HepG2 (cell line): ENCODE measurements at regions of chr20 and their contacts with region 1.

Region 1: GRCh38 chr20:45322952-45323383 is 14.9 kb upstream of the MATN4 start:
- DNase-seq: peak; percentile 86
- ATAC-seq: peak; percentile 85
- H3K4me3 ChIP-seq: peak overlapping the region in 1 of 3 experiments; percentile 13; a peak in 1 of 6 replicates
- H3K27ac ChIP-seq: no peak overlapping the region
- H3K4me1 ChIP-seq: no peaks in the 10 kb centered on the region
- H3K27me3 ChIP-seq: peaks cover 2 to 7% of the 10 kb centered on the region in 2 experiments; a peak in 1 of 5 replicates
- CTCF ChIP-seq: peak; percentile 99
- EP300 ChIP-seq: no peak
- POLR2A ChIP-seq: no peak
- RAD21 ChIP-seq: peak; percentile 98

Region 2: GRCh38 chr20:45157962-45158361 is 165.0 kb before region 1 on chr20:
- CTCF ChIA-PET with region 1: no interaction called
- POLR2A ChIA-PET with region 1: no interaction called
- in situ Hi-C with region 1: no loop called
- intact Hi-C with region 1: no loop called
- DNase-seq: no peak
- ATAC-seq: no peak
- H3K4me3 ChIP-seq: no peak overlapping the region
- H3K27ac ChIP-seq: no peak overlapping the region
- H3K4me1 ChIP-seq: no peaks in the 10 kb centered on the region
- H3K27me3 ChIP-seq: no peaks in the 10 kb centered on the region
- CTCF ChIP-seq: no peak
- EP300 ChIP-seq: no peak
- POLR2A ChIP-seq: no peak
- RAD21 ChIP-seq: no peak

Region 3: GRCh38 chr20:45337367-45338120 is 14.6 kb after region 1 on chr20:
- CTCF ChIA-PET with region 1: interaction called, 3 read pairs
- POLR2A ChIA-PET with region 1: interaction called, 74 read pairs
- in situ Hi-C with region 1: no loop called
- intact Hi-C with region 1: loop called (anchors 2 kb)
- DNase-seq: peak; percentile 65
- ATAC-seq: peak; percentile 32
- H3K4me3 ChIP-seq: peak overlapping the region; percentile 31 to 57 (median 32)
- H3K27ac ChIP-seq: peak overlapping the region; percentile 80
- H3K4me1 ChIP-seq: peaks cover 67% of the 10 kb centered on the region
- H3K27me3 ChIP-seq: no peaks in the 10 kb centered on the region
- CTCF ChIP-seq: no peak
- EP300 ChIP-seq: no peak
- POLR2A ChIP-seq: peak in 1 of 2 experiments; percentile 39; a peak in 1 of 4 replicates
- RAD21 ChIP-seq: no peak

Region 4: DNA sequence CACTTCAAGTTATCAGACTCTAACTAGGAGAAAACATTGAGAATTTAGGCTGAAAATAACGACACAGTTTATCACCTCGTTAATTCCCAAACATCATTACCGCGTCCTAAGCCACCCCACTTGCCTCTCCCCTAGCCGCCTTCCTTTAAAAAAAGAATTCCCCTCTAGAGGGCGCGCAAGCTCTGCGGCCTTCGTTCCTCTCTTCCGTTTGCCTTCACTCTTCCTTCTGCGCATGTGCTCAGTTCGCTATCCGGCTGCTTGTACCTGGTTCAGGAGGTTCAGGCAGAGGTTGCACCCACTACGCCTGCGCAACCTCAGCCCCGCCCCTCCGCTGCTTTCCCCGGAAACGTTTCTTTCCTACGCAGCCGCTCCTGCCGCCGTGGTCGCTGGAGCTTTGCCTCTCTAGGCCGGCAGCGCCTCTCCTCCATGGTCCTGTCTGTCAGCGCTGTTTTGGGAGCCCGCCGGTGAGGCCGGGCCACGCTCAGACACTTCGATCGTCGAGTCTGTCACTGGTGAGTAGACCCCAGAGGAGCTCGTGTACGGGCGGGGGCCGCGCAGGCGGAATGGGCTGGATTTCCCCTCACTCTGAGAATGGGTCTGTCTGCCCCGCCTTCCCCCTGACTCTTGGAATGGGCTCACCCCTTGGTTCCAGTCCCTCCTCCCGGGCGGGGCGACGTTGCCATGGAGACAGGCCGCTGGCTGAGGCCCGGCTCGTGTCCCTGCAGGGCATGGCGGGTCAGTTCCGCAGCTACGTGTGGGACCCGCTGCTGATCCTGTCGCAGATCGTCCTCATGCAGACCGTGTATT is 40.0 kb after region 1 on chr20 and contains the start of gene SYS1:
- CTCF ChIA-PET with region 1: interaction called, 11 read pairs
- POLR2A ChIA-PET with region 1: interaction called, 26 read pairs
- in situ Hi-C with region 1: no loop called
- intact Hi-C with region 1: loop called (anchors 1 kb)
- DNase-seq: peak; percentile 100
- ATAC-seq: peak; percentile 89
- H3K4me3 ChIP-seq: peak within 1 kb of the TSS; percentile 78 to 95 (median 91)
- H3K27ac ChIP-seq: peak within 1 kb of the TSS; percentile 92
- H3K4me1 ChIP-seq: peaks cover 64% of the 10 kb centered on the region
- H3K27me3 ChIP-seq: no peaks in the 10 kb centered on the region; a peak in 2 of 5 replicates
- CTCF ChIP-seq: peak; percentile 99
- EP300 ChIP-seq: peak; percentile 8 to 29; a peak in 3 of 4 replicates
- POLR2A ChIP-seq: peak; percentile 94 to 98
- RAD21 ChIP-seq: peak; percentile 89
- total RNA-seq, gene SYS1: 22.0 and 38.3 TPM in 2 replicates

Region 5: GRCh38 chr20:45392733-45393132 is 69.8 kb after region 1 on chr20:
- CTCF ChIA-PET with region 1: no interaction called
- POLR2A ChIA-PET with region 1: no interaction called
- in situ Hi-C with region 1: no loop called
- intact Hi-C with region 1: no loop called
- DNase-seq: no peak
- ATAC-seq: no peak
- H3K4me3 ChIP-seq: no peak overlapping the region
- H3K27ac ChIP-seq: no peak overlapping the region
- H3K4me1 ChIP-seq: no peaks in the 10 kb centered on the region
- H3K27me3 ChIP-seq: no peaks in the 10 kb centered on the region
- CTCF ChIP-seq: peak; percentile 22
- EP300 ChIP-seq: no peak
- POLR2A ChIP-seq: no peak
- RAD21 ChIP-seq: no peak

Region 6: GRCh38 chr20:45415774-45416637 is 93.0 kb after region 1 on chr20 and contains the start of gene PIGT:
- CTCF ChIA-PET with region 1: no interaction called
- POLR2A ChIA-PET with region 1: interaction called, 16 read pairs
- in situ Hi-C with region 1: no loop called
- intact Hi-C with region 1: loop called (anchors 1 kb)
- DNase-seq: peak; percentile 93
- ATAC-seq: peak; percentile 99
- H3K4me3 ChIP-seq: peak within 1 kb of the TSS; percentile 84 to 97 (median 86)
- H3K27ac ChIP-seq: peak within 1 kb of the TSS; percentile 62
- H3K4me1 ChIP-seq: peaks cover 31% of the 10 kb centered on the region
- H3K27me3 ChIP-seq: no peaks in the 10 kb centered on the region; a peak in 1 of 5 replicates
- CTCF ChIP-seq: peak; percentile 38; the same call in 1 of the 2 replicates
- EP300 ChIP-seq: peak; percentile 40 to 46; a peak in 2 of 4 replicates
- POLR2A ChIP-seq: peak; percentile 93 to 98
- RAD21 ChIP-seq: peak; percentile 82
- total RNA-seq, gene PIGT: 26.4 and 65.9 TPM in 2 replicates

Region 7: DNA sequence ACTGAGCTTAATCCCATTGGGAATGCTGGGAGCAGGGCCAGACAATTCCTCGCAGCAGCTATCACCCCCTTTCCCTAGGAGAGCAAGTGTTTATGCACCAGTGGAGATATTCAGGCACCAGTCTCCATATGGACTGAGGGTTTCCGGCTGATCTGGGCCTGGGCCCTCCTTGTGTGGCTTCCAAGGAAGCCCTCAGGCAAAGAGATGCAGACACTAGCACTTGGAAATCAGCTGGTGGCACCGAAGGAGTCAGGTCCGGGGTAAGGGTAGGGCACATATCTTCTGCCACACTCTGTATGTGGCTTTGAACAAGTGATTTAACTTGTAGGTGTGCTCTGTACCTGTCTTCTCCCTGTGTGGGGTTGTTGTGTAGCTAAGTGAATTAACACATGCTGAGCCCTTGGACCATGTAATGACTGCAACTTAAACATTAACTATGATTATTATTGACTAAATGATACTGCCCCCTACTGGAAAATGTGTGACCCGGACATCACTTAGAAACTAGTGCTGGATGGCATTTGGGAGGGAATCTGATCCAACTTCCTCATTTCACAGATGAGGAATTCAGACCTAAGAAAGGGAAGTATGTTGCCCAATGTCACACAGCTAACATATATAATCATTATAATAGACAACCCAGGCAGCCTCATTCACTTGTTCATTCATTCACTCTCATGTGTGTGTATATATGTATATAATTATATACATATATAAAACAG is 127.3 kb after region 1 on chr20:
- CTCF ChIA-PET with region 1: interaction called, 15 read pairs
- POLR2A ChIA-PET with region 1: no interaction called
- in situ Hi-C with region 1: no loop called
- intact Hi-C with region 1: loop called (anchors 1 kb)
- DNase-seq: peak; percentile 66
- ATAC-seq: peak; percentile 70
- H3K4me3 ChIP-seq: no peak overlapping the region
- H3K27ac ChIP-seq: no peak overlapping the region
- H3K4me1 ChIP-seq: peaks cover 6% of the 10 kb centered on the region
- H3K27me3 ChIP-seq: no peaks in the 10 kb centered on the region
- CTCF ChIP-seq: peak; percentile 73
- EP300 ChIP-seq: no peak
- POLR2A ChIP-seq: no peak
- RAD21 ChIP-seq: peak; percentile 30; the same call in 1 of the 2 replicates

Region 8: GRCh38 chr20:45771182-45771759 is 448.3 kb after region 1 on chr20:
- CTCF ChIA-PET with region 1: interaction called, 12 read pairs
- POLR2A ChIA-PET with region 1: interaction called, 7 read pairs
- in situ Hi-C with region 1: loop called (anchors 5 kb)
- intact Hi-C with region 1: no loop called
- DNase-seq: peak; percentile 92
- ATAC-seq: peak; percentile 90
- H3K4me3 ChIP-seq: peak overlapping the region in 1 of 3 experiments; percentile 44; a peak in 2 of 6 replicates
- H3K27ac ChIP-seq: no peak overlapping the region
- H3K4me1 ChIP-seq: peaks cover 15% of the 10 kb centered on the region
- H3K27me3 ChIP-seq: peaks cover 2 to 15% of the 10 kb centered on the region in 2 experiments; a peak in 3 of 5 replicates
- CTCF ChIP-seq: peak; percentile 97
- EP300 ChIP-seq: 0 out of 4 replicates have a peak, but pooled peaks of 1 of the 2 experiments have one; percentile 1
- POLR2A ChIP-seq: no peak
- RAD21 ChIP-seq: peak; percentile 99